Right ventricle myocardium superior (tissue), 1 donor: ENCODE measurements at regions of chr5 and their contacts with region 1.

Region 1: DNA sequence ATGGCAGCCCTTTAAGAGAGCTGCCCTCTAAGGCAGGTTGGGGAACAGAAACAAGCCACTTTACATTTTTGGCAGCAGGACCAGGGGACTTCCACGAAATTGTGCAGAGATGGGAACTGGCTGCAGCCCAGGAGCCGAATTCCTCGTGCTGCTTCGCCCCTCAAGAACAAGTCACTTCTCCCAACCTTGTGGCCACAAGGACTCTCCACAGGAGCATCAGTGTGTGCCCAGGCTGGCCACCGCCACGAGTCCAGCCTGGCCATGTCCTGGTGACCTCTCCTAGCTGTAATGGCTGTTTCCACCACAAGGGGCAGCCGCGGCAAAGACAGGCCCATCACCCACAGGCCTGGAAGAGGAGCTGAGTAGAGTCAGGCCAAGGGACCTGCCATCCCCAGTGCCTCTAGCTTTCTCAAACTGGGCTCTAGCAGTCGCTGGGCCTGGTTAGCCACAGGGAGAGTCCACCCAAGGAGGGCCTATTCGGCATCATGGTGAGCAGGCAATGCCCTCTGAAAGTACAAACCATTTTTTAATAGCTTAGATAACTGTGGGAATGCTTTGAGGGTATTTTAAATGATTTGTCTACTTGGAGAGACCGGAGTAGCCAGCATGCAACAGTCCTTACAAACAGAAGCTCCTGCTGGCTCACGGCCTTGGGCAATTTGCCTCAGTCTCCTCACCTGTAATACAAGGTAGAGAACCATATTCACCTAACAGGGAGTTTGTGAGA is 129.0 kb downstream of the COL23A1 start:
- DNase-seq: peak; percentile 89
- ATAC-seq: peak; percentile 94

Region 2: GRCh38 chr5:178551059-178551458 is 89.9 kb after region 1 on chr5:
- intact Hi-C with region 1: loop called (anchors 5 kb)
- DNase-seq: no peak
- ATAC-seq: no peak